Right cardiac atrium (tissue), 5 donors: ENCODE measurements at regions of chr21 and their contacts with region 1.

Region 1: DNA sequence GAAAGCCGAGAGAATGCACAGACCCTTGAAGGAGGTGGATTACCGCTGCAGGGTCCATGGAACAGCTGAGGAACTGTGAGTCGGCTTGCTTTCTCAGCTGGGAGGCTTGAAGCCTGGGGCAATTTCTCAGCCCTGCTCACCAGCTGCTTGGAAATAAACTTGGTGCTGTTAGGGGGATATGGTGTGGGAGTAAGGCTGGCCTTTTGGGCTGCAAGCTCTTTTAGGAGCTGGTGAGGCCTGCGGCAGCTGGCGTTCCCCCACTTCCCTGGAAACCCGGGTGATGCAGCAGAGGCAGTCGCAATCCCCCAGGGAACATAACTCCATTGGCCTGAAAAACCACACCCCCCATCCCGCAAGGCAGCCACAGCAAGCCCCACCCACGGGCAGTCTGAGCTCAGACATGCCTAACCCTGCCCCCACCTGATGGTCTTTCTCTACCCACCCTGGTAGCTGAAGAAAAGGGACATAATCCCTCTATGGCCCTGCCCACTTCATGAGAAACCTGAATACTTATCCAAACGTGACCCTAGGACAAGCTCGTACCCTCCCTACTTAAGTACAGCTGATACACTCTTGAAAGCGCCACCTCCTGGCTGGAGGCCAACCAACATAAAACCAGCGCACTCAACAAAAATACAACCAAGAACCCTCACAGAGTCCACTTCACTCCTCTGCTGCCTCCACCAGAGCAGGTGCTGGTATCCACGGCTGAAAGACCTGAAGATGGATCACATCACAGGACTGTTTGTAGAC is 1995.8 kb downstream of the NCAM2 start:
- DNase-seq: peak in 1 of 3 donors; percentile 18
- ATAC-seq: no peak
- H3K4me3 ChIP-seq: no peak overlapping the region
- H3K27ac ChIP-seq: no peak overlapping the region
- H3K4me1 ChIP-seq: no peaks in the 10 kb centered on the region
- H3K27me3 ChIP-seq: no peaks in the 10 kb centered on the region

Region 2: GRCh38 chr21:23152130-23152529 is 158.1 kb after region 1 on chr21:
- intact Hi-C with region 1: no loop called
- DNase-seq: no peak
- ATAC-seq: no peak
- H3K4me3 ChIP-seq: no peak overlapping the region
- H3K27ac ChIP-seq: no peak overlapping the region
- H3K4me1 ChIP-seq: no peaks in the 10 kb centered on the region
- H3K27me3 ChIP-seq: no peaks in the 10 kb centered on the region

Region 3: DNA sequence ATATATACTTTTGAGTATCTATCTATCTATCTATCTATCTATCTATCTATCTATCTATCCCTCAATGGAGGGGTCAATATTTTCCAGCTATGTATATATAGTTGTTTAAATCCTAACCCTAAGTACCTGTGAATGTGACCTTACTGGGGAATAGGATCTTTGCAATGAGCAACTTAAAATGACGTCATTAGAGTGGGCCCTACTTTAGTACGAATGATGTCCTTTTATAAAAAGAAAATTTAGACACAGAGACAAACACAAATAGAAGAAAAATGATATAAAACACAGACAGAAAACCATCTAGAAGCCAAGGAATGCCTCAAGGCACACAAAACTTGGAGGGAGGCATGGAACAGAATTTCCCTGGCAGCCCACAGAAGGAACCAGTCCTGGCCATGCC is 287.9 kb after region 1 on chr21:
- intact Hi-C with region 1: loop called in 1 of 4 experiments (anchors 10 kb)
- DNase-seq: no peak
- ATAC-seq: no peak
- H3K4me3 ChIP-seq: no peak overlapping the region
- H3K27ac ChIP-seq: no peak overlapping the region
- H3K4me1 ChIP-seq: no peaks in the 10 kb centered on the region
- H3K27me3 ChIP-seq: no peaks in the 10 kb centered on the region